ENCODE measurements at regions of chr5 and their contacts with region 1.

Region 1: GRCh38 chr5:163489055-163489744 is 16.2 kb upstream of the MAT2B start:
- DNase-seq: no peak
- H3K4me3 ChIP-seq: no peak overlapping the region
- H3K27ac ChIP-seq: no peak overlapping the region
- H3K4me1 ChIP-seq: no peaks in the 10 kb centered on the region
- CTCF ChIP-seq: peak; percentile 42

Region 2: DNA sequence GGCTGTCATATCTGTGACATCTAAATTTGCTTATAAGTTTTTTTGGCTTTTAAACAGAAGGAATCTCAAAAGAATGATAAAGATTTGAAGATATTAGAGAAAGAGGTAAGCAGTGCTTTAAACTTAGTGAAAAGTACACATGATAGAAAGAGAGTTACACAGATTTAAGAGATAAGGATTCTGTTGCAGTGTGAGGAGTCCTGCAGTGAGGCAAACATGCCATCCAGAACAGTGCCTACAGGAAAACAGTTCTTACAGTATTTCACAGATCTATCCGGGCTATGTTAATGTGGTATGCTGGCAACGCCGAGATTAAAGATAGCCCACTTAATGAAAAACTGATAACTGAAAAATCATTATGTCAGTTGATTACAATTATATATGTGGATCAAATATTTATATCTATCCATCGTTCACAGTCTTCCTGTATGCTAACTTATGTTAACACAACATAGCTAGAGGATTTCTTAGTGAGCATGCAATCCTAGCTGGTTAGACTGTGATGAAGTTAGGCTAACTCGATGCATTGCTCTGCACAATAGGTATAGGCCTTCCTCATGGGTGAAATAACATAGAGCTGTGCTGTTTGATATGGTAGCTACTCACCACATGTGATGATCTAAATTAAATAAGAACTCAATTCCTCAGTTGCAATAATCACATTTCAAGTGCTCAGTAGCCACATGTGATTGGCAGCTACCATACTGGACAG is 21.4 kb before region 1 on chr5:
- CTCF ChIA-PET with region 1: no interaction called
- POLR2A ChIA-PET with region 1: interaction called, 10 read pairs
- intact Hi-C with region 1: no loop called
- DNase-seq: no peak
- H3K4me3 ChIP-seq: no peak overlapping the region
- H3K27ac ChIP-seq: no peak overlapping the region
- H3K4me1 ChIP-seq: peaks cover 8% of the 10 kb centered on the region
- CTCF ChIP-seq: no peak

Region 3: GRCh38 chr5:163512516-163512915 is 23.3 kb after region 1 on chr5:
- CTCF ChIA-PET with region 1: no interaction called
- POLR2A ChIA-PET with region 1: no interaction called
- intact Hi-C with region 1: no loop called
- DNase-seq: no peak
- H3K4me3 ChIP-seq: no peak overlapping the region
- H3K27ac ChIP-seq: no peak overlapping the region
- H3K4me1 ChIP-seq: peaks cover 25% of the 10 kb centered on the region
- CTCF ChIP-seq: no peak

Measured in OCI-LY7 (cell line).